ENCODE measurements at regions of chr10 and their contacts with region 1.

Region 1: GRCh38 chr10:62637249-62638061 is 167.1 kb upstream of the ADO start:
- DNase-seq: peak; percentile 73
- H3K4me3 Mint-ChIP-seq: no peak overlapping the region
- H3K27ac Mint-ChIP-seq: no peak overlapping the region
- H3K4me1 Mint-ChIP-seq: peaks cover 28% of the 10 kb centered on the region
- H3K27me3 Mint-ChIP-seq: no peaks in the 10 kb centered on the region

Region 2: GRCh38 chr10:62610649-62611229 is 26.7 kb before region 1 on chr10:
- intact Hi-C with region 1: loop called (anchors 1 kb)
- DNase-seq: peak; percentile 65
- H3K4me3 Mint-ChIP-seq: no peak overlapping the region
- H3K27ac Mint-ChIP-seq: peak overlapping the region; percentile 11
- H3K4me1 Mint-ChIP-seq: peaks cover 59% of the 10 kb centered on the region
- H3K27me3 Mint-ChIP-seq: peaks cover 9% of the 10 kb centered on the region

Region 3: GRCh38 chr10:62681211-62681940 is 43.9 kb after region 1 on chr10:
- intact Hi-C with region 1: loop called (anchors 1 kb)
- DNase-seq: peak; percentile 80
- H3K4me3 Mint-ChIP-seq: peak overlapping the region; percentile 69
- H3K27ac Mint-ChIP-seq: peak overlapping the region; percentile 95
- H3K4me1 Mint-ChIP-seq: peaks cover 77% of the 10 kb centered on the region
- H3K27me3 Mint-ChIP-seq: no peaks in the 10 kb centered on the region

Region 4: DNA sequence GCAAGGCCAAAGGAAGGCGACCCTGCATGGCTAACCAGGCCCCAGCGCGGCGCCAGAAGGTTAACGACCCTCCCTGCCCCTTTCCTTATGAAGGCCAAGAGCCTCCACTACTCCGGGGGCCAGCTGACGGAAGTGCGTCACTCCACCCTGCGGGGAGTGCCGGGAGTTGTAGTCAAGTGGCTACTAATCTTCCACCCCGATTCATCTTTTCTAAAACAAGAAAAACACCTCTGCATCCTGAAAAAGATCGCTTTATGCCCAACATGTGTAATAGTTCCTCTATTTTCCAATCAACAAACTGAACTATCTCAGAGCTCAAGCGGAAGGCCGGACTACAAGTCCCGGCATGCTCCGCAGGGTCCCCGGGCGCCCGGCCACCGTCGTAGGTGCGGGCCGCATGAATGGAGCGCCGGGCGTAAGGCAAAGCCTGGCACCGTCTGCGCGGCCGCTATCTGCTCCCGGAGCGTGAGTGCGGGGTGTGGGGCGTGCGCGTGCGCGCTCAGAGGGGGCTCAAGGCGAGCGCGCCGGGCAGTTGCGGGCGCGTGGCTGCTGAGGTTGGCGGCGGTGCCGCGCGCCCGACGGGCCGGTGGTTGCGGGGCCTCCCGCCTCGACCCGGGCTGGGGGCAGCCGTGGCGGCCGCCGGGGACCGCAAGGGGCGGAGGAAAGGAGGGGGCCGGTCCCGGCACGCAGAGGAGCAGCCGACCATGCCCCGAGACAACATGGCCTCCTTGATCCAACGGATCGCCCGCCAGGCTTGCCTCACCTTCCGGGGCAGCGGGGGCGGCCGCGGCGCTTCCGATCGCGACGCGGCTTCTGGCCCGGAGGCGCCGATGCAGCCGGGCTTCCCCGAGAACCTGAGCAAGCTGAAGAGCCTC is 167.1 kb after region 1 on chr10 and contains the start of gene ADO:
- intact Hi-C with region 1: loop called (anchors 1 kb)
- DNase-seq: peak; percentile 68
- H3K4me3 Mint-ChIP-seq: peak within 1 kb of the TSS; percentile 90
- H3K27ac Mint-ChIP-seq: peak within 1 kb of the TSS; percentile 95
- H3K4me1 Mint-ChIP-seq: peaks cover 41% of the 10 kb centered on the region
- H3K27me3 Mint-ChIP-seq: peaks cover 11% of the 10 kb centered on the region
- total RNA-seq, gene ADO: 52.3 and 55.8 TPM in 2 replicates

Region 5: GRCh38 chr10:62992145-62992721 is 354.8 kb after region 1 on chr10:
- intact Hi-C with region 1: loop called (anchors 1 kb)
- DNase-seq: no peak
- H3K4me3 Mint-ChIP-seq: peak overlapping the region; percentile 58
- H3K27ac Mint-ChIP-seq: peak overlapping the region; percentile 94
- H3K4me1 Mint-ChIP-seq: peaks cover 52% of the 10 kb centered on the region
- H3K27me3 Mint-ChIP-seq: peaks cover 4% of the 10 kb centered on the region

Region 6: DNA sequence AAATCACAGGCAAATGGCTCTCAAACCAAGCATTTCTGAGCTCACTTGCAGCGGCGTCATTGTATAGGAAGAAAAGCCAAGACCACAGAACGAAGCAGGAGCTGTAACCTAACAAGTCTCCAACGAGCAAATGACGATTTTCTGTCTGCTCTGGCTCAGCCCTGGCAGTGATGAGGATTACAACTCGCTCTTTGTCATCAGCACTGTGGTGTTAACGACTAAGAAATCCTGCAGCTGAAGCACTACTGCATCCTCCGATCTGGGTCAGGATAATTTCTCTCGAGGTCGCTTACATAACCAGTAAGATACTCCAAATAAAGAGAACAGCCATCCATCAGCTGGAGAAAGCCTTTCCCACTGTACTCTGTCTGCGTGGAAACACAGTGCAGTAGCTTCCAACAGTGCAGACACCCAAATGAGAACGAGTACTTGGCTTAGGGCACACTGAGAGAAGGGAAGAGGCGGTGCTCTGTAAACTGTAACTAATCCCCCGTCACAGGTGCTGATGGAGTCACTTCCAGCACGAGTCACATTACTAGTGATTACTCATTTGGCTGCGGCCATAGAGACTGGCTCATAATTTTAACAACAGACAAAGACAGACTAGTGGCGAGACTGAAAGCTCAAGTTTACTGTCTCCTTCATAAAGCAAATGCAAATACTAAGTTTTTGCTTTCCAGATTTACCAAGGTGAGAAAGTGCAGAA is 631.5 kb after region 1 on chr10:
- intact Hi-C with region 1: loop called (anchors 5 kb)
- DNase-seq: peak; percentile 81
- H3K4me3 Mint-ChIP-seq: peak overlapping the region; percentile 95
- H3K27ac Mint-ChIP-seq: peak overlapping the region; percentile 98
- H3K4me1 Mint-ChIP-seq: peaks cover 31% of the 10 kb centered on the region
- H3K27me3 Mint-ChIP-seq: no peaks in the 10 kb centered on the region

Measured in activated T-helper 1 cell treated with anti-CD3 and anti-CD28 coated beads, Interleukin-12 subunit alpha, Interleukin-12 subunit beta, Interleukin-2, Interleukin-4 antibody, amounts not matched to agents 30 ng/mL and 10 ng/mL and 1 ng/mL, durations not matched to agents 14 hours and 24 hours and 36 hours (primary cell).